ENCODE measurements at regions of chr6 and their contacts with region 1.

Region 1: GRCh38 chr6:111427341-111428116 is 55.5 kb downstream of the REV3L start:
- DNase-seq: peak; percentile 54
- ATAC-seq: peak; percentile 81
- H3K4me3 ChIP-seq: peak overlapping the region; percentile 54; the same call in 1 of the 2 replicates
- H3K27ac ChIP-seq: peak overlapping the region; percentile 73
- H3K4me1 ChIP-seq: peaks cover 25% of the 10 kb centered on the region
- H3K27me3 ChIP-seq: no peaks in the 10 kb centered on the region
- CTCF ChIP-seq: no peak
- EP300 ChIP-seq: no peak
- POLR2A ChIP-seq: no peak
- RAD21 ChIP-seq: no peak

Region 2: DNA sequence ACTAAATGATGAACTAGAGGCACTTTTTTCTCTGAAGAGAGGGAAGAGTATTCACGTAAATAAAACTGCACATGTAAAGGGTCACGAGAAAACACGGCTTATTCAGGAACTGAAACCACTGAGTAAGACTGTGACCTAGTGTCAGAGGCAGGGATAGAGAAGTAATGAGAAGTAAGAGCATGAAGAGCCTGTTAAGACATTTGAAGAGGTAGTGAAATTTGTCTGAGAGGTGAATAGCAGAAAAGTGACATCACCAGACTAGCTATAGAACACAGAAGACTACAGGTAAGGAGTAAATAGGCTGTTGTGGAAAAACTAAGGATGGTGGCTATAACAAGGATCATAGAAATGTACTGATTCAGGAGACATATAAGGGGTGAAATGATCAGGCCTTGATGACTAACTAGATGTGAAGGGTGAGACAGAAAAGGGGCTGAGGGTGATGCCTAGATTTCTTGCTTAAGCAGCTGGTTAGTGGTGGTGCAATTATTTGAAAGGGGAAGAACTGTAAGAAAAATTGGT is 21.3 kb before region 1 on chr6:
- CTCF ChIA-PET with region 1: interaction called, 3 read pairs
- POLR2A ChIA-PET with region 1: interaction called, 4 read pairs
- RAD21 ChIA-PET with region 1: interaction called, 7 read pairs
- SMC1A ChIA-PET with region 1: interaction called, 14 read pairs
- in situ Hi-C with region 1: no loop called
- intact Hi-C with region 1: no loop called
- DNase-seq: peak; percentile 96
- ATAC-seq: peak; percentile 94
- H3K4me3 ChIP-seq: no peak overlapping the region
- H3K27ac ChIP-seq: peak overlapping the region; percentile 59
- H3K4me1 ChIP-seq: peaks cover 28% of the 10 kb centered on the region
- H3K27me3 ChIP-seq: no peaks in the 10 kb centered on the region
- CTCF ChIP-seq: no peak
- EP300 ChIP-seq: peak; percentile 98 to 100; a peak in 3 of 4 replicates
- POLR2A ChIP-seq: no peak
- RAD21 ChIP-seq: peak; percentile 37; the same call in 1 of the 2 replicates

Region 3: DNA sequence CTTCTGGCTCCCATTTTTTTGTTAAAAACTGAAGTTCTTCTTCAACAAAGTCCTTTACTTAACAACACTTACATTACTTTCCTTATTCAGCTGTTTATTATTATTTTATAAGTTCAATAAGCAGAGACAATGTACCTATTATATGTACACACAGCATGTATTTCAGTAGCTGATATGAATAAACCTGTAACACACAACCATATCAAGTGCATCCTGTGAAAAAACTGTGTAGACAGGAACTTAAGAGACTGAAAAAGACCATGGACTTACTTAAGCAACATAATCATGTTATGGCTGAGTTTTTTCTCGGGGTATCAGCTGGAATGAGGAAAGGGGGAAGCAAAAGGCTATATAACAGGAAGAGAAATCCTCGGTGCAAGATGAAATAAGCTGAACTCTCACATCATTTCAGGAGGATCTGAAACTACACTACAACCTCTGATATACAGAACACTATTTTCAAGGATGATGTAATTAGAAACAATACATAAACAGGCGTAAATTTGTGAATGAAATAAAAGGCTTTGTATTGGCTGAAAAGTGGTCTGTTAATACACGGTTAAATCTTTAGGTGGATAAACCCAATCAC is 15.5 kb before region 1 on chr6:
- CTCF ChIA-PET with region 1: interaction called, 6 read pairs
- POLR2A ChIA-PET with region 1: interaction called, 4 read pairs
- RAD21 ChIA-PET with region 1: interaction called, 7 read pairs
- SMC1A ChIA-PET with region 1: interaction called, 14 read pairs
- in situ Hi-C with region 1: no loop called
- intact Hi-C with region 1: no loop called
- DNase-seq: peak; percentile 48
- ATAC-seq: peak; percentile 74
- H3K4me3 ChIP-seq: no peak overlapping the region
- H3K27ac ChIP-seq: peak overlapping the region; percentile 64
- H3K4me1 ChIP-seq: peaks cover 31% of the 10 kb centered on the region
- H3K27me3 ChIP-seq: no peaks in the 10 kb centered on the region
- CTCF ChIP-seq: no peak
- EP300 ChIP-seq: peak in 1 of 2 experiments; percentile 81; a peak in 2 of 4 replicates
- POLR2A ChIP-seq: no peak
- RAD21 ChIP-seq: no peak

Region 4: GRCh38 chr6:111456208-111456607 is 28.7 kb after region 1 on chr6:
- CTCF ChIA-PET with region 1: interaction called, 3 read pairs
- POLR2A ChIA-PET with region 1: no interaction called
- RAD21 ChIA-PET with region 1: no interaction called
- SMC1A ChIA-PET with region 1: interaction called, 11 read pairs
- in situ Hi-C with region 1: no loop called
- intact Hi-C with region 1: no loop called
- DNase-seq: no peak
- ATAC-seq: no peak
- H3K4me3 ChIP-seq: no peak overlapping the region
- H3K27ac ChIP-seq: no peak overlapping the region
- H3K4me1 ChIP-seq: no peaks in the 10 kb centered on the region
- H3K27me3 ChIP-seq: no peaks in the 10 kb centered on the region
- CTCF ChIP-seq: no peak
- EP300 ChIP-seq: no peak
- POLR2A ChIP-seq: no peak
- RAD21 ChIP-seq: no peak